ENCODE measurements at regions of chr2 and their contacts with region 1.

Region 1: GRCh38 chr2:137838255-137839092 is 125.8 kb upstream of the HNMT start:
- DNase-seq: peak; percentile 29
- ATAC-seq: peak; percentile 70
- H3K4me3 ChIP-seq: no peak overlapping the region
- H3K27ac ChIP-seq: no peak overlapping the region
- H3K4me1 ChIP-seq: no peaks in the 10 kb centered on the region
- H3K27me3 ChIP-seq: peaks cover 3% of the 10 kb centered on the region; the same call in 1 of the 2 replicates
- CTCF ChIP-seq: peak; percentile 28 to 74 (median 51); a peak in 4 of 6 replicates
- POLR2A ChIP-seq: no peak
- RAD21 ChIP-seq: peak; percentile 80

Region 2: GRCh38 chr2:136582628-136583205 is 1255.8 kb before region 1 on chr2:
- CTCF ChIA-PET with region 1: no interaction called
- POLR2A ChIA-PET with region 1: no interaction called
- RAD21 ChIA-PET with region 1: no interaction called
- intact Hi-C with region 1: loop called (anchors 10 kb)
- DNase-seq: no peak
- ATAC-seq: no peak
- H3K4me3 ChIP-seq: no peak overlapping the region
- H3K27ac ChIP-seq: no peak overlapping the region
- H3K4me1 ChIP-seq: no peaks in the 10 kb centered on the region
- H3K27me3 ChIP-seq: no peaks in the 10 kb centered on the region
- CTCF ChIP-seq: no peak
- POLR2A ChIP-seq: no peak
- RAD21 ChIP-seq: no peak

Region 3: DNA sequence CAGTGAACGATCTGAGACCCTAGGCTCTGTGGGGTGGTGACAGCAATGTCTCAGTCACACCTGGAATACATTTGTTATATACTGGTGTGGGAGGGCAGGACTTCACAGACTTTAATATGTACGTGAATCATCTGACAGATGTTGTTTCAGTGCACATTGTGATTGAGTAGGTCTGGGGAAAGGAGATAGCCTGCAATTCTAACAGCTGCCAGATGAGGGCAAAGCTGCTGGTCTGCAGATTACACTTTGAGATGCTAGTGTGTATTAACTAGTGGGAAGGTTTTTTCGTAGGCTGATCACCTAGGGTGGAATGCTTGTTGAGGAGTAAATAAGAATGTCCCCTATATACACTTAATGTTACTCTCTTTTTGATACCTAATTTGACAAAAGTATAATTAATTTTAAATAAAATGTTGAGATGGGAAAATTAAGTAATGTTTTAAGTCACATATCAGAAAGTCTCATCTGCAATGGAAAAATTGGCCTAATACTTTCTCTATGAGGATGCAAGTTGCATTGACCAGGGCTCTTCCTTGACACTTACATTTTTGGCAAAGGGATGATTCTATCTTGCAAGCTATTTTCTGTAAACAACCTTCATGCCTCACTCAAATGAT is 371.1 kb before region 1 on chr2:
- CTCF ChIA-PET with region 1: interaction called, 3 read pairs
- POLR2A ChIA-PET with region 1: no interaction called
- RAD21 ChIA-PET with region 1: no interaction called
- intact Hi-C with region 1: loop called (anchors 1 kb)
- DNase-seq: no peak
- ATAC-seq: no peak
- H3K4me3 ChIP-seq: no peak overlapping the region
- H3K27ac ChIP-seq: no peak overlapping the region
- H3K4me1 ChIP-seq: no peaks in the 10 kb centered on the region
- H3K27me3 ChIP-seq: no peaks in the 10 kb centered on the region
- CTCF ChIP-seq: peak; percentile 6 to 52 (median 47); a peak in 4 of 6 replicates
- POLR2A ChIP-seq: no peak
- RAD21 ChIP-seq: 0 out of 2 replicates have a peak, but pooled peaks have one; percentile 12

Region 4: DNA sequence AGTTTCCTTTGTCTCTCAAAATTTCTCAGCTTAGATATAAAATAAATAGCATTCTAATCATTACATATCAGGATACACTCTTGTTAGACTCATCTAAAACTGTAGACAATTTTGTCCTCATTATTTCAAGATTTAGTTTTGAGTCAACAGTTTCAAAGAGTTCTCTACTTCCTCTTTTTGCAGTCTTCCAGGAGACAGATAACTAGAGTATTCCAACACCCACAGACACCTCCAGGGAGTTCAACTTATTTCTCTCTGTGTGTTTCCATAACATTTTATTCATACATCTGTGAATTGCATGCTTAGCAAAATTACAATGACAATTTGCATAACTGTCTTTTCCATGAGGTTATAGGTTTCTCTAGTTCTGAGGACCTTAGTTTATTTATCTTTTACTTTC is 40.8 kb before region 1 on chr2:
- CTCF ChIA-PET with region 1: no interaction called
- POLR2A ChIA-PET with region 1: no interaction called
- RAD21 ChIA-PET with region 1: no interaction called
- intact Hi-C with region 1: no loop called
- DNase-seq: no peak
- ATAC-seq: no peak
- H3K4me3 ChIP-seq: no peak overlapping the region
- H3K27ac ChIP-seq: no peak overlapping the region
- H3K4me1 ChIP-seq: no peaks in the 10 kb centered on the region
- H3K27me3 ChIP-seq: no peaks in the 10 kb centered on the region
- CTCF ChIP-seq: no peak
- POLR2A ChIP-seq: no peak
- RAD21 ChIP-seq: no peak

Measured in HCT116 (cell line).